Panc1 (cell line): ENCODE measurements at regions of chr18 and their contacts with region 1.

Region 1: GRCh38 chr18:76982841-76983587 is 149.6 kb downstream of the MBP start:
- DNase-seq: peak; percentile 70
- ATAC-seq: peak; percentile 94
- H3K4me3 ChIP-seq: peak overlapping the region in 1 of 2 experiments; percentile 22; a peak in 2 of 4 replicates
- H3K27ac ChIP-seq: no peak overlapping the region; the same call in 1 of the 2 replicates
- H3K4me1 ChIP-seq: peaks cover 6% of the 10 kb centered on the region
- H3K27me3 ChIP-seq: no peaks in the 10 kb centered on the region
- CTCF ChIP-seq: no peak

Region 2: DNA sequence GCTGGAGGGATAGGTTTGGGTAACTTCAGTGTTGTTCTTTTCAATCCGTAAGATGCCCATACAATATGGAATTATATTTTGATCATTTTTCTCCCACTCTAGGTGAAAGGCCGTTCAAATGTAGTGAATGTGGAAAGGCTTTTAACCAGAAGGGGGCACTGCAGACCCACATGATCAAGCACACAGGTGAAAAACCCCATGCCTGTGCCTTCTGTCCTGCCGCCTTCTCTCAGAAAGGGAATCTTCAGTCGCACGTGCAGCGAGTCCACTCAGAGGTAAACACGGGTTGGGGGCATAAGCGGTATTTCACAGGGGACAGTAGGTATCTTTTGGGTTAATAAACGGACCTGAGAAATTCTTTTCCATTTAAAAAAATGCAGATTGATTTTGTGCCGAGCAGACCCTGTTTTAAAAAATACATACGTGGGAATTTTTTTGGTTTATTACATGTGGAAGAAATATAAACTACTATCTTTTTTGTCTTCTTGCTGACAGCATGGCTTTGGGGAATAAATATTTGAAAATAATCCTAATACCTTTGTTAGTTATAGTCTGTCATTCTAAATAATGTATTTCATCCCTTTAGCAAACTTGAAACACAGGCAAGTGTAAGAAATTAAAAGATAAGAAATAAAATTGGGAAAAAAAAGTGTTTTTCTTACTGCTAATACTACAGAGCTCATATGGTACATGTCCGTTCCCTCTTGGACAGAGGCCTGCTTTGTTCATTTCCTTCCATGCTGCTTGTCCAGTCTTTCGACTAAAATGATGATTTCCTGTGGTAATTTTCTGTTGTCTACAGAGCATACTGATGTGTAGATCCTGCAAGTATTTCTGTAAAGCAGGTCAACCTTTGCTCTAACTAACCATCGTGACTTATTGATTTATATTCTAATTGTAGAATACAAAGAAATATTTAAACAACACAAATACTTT is 107.4 kb before region 1 on chr18:
- CTCF ChIA-PET with region 1: no interaction called
- POLR2A ChIA-PET with region 1: no interaction called
- in situ Hi-C with region 1: no loop called
- intact Hi-C with region 1: loop called (anchors 1 kb)
- DNase-seq: peak; percentile 51
- ATAC-seq: peak; percentile 92
- H3K4me3 ChIP-seq: no peak overlapping the region
- H3K27ac ChIP-seq: no peak overlapping the region
- H3K4me1 ChIP-seq: no peaks in the 10 kb centered on the region
- H3K27me3 ChIP-seq: no peaks in the 10 kb centered on the region
- CTCF ChIP-seq: peak; percentile 97

Region 3: DNA sequence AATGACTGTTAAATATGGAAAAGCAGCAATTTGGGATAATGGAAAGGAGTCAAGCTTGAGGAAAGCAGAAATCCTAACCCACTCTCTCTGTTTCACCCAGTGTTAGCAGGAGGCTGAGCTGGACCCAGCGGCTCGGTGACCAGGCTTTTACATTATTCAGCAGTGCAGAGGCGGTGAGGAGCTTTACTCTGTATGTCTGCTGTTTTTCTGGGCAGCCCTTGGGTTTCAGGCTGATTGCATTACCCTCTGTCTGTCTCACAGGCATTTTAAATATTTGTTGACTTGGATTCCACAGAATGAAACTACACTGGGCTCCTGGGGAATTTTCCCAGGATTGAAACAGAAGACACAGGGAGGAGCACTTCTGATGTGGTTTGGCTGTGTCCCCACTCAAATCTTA is 634.7 kb after region 1 on chr18:
- CTCF ChIA-PET with region 1: no interaction called
- POLR2A ChIA-PET with region 1: no interaction called
- in situ Hi-C with region 1: no loop called
- intact Hi-C with region 1: no loop called
- DNase-seq: no peak
- ATAC-seq: no peak
- H3K4me3 ChIP-seq: no peak overlapping the region
- H3K27ac ChIP-seq: no peak overlapping the region
- H3K4me1 ChIP-seq: no peaks in the 10 kb centered on the region; the same call in 1 of the 2 replicates
- H3K27me3 ChIP-seq: 0 out of 2 replicates have a peak, but pooled peaks cover 1% of the 10 kb centered on the region
- CTCF ChIP-seq: no peak